HEK293T (cell line): ENCODE measurements at regions of chr2 and their contacts with region 1.

Region 1: DNA sequence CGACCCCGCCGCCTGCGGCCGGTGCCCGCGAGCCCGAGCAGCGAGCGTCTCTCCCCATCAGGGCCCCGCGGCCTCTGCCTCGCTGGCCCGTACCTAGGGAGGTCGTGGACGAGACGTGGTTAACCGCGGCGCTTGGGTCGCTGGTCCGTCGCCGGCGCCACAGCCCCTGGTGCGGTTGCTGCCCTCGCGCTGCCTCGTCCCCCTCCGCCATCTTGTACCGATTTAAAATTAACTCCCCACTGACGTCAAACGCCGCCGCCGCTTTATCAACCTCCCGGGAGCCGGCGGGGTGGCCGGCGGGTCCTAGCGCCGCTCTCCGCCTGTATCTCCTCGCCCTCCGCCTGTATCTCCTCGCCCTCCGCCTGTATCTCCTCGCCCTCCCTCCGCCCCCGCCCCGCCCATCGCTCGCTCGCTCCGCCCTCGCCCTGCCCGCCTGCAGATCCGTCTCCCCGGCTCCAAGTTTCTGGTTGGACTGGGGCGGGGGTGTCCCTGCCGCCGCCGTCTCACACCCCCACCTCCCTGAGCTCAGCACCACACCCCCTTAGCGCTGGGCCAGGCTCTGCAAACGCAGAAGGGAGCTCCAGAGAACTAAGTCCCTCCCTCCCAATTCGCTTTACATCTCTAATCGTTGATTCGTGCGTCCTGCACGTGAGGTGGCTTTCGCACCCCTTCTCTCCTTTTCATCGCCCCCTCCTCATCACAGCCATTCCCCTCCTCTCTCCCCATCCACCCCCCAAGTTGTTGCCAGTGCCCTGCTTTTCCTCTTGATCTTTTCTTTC is at the start of gene ATL2:
- DNase-seq: peak; percentile 81

Region 2: DNA sequence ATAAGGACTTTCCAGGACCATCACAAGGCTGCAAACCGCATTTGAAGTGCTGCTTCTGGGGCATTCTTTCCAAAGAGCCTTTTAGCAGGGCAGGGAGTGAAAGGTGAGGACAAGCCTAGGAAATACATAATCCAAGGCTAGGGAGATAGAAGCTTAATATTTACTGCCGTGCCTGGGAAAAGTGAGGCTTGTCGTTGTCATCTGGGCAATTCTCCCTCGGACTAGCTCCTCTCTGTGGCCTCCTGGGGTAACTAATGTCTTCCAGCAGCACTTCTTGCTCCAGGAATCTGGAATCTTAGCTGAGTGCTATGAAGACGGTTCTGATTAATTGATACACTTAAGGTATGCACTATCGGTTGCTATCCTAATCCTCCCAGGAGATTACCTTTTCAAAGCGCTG is 69.2 kb after region 1 on chr2:
- CTCF ChIA-PET with region 1: interaction called, 6 read pairs
- POLR2A ChIA-PET with region 1: interaction called, 17 read pairs
- DNase-seq: no peak

Region 3: GRCh38 chr2:38465789-38466127 is 88.5 kb after region 1 on chr2:
- CTCF ChIA-PET with region 1: interaction called, 21 read pairs
- POLR2A ChIA-PET with region 1: interaction called, 3 read pairs
- DNase-seq: peak; percentile 62

Region 4: DNA sequence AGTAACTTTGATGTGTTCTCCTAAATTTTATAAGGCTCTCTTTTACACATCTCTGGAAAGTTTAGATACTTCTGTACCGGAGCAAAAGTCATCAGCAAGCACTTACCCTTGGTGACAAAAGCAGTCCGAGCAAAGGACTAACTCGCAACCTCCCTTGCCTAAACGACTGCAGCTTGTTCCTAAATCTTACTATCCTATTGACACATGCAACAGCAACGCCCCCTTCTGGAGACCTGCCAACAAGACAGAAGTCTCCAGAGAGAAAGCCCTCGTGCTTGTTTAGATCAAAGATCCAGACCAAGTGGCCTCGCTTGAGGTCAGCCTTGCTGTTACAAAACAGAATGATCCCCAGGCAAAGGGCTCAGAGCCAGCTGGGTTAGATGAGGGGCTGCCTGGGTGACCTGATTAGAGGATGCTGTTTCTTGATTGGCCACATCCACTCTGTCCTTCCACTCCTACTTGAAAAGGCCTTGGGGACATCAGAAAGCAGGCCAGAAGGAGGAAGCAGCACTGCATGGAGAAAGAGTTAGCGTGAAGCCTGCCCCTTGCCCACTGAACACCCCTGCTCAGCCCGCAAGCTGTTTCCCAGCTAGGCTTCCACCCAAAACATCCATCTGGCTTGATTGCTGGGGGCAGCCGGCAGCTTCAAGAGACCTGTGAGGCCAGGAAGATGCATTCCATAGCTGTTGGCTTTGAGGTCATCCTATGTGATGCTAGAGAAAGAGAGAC is 131.2 kb after region 1 on chr2:
- CTCF ChIA-PET with region 1: interaction called, 19 read pairs
- POLR2A ChIA-PET with region 1: no interaction called
- DNase-seq: peak; percentile 81